Right ventricle myocardium superior (tissue), 1 donor: ENCODE measurements at regions of chr3 and their contacts with region 1.

Region 1: DNA sequence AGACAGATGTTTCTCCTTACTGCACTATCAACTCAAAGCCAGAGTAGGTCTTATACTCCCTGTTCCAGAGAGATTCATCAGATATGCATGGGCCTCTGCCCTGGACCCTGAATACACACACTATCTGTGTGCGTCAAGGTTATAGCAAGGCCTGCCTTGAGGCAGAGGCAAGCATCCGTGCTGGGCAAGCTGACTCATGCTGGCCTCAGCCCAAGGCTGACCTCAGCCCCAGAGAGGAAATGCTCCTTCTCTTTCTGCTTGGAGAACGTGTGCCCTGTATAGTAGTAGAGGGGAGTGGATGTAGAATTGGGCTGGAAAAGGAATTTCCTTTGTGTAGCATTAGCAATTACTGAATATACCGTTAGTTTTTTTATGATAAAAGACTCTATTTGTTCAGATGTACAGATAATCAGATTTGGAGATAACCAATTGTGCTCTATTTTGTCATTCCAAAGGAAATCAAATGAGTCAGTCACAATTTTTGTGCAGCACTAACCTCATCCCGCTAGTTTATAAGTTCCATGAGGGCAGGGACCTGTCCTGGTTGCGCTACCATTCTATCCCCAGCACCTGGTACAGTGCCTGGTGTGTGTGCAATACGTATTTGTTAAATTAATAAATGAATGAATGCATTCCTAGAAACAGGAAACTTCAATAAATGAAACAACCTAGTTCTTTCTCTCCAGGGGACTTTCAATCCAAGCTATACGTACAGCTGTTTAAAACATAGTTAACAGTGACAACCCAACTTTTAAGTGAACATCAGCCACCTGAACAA is 13.3 kb upstream of the PAQR9 start:
- DNase-seq: peak; percentile 93
- ATAC-seq: peak; percentile 73

Region 2: GRCh38 chr3:142857056-142857455 is 119.8 kb before region 1 on chr3:
- intact Hi-C with region 1: loop called (anchors 10 kb)
- DNase-seq: peak; percentile 81
- ATAC-seq: peak; percentile 95

Region 3: DNA sequence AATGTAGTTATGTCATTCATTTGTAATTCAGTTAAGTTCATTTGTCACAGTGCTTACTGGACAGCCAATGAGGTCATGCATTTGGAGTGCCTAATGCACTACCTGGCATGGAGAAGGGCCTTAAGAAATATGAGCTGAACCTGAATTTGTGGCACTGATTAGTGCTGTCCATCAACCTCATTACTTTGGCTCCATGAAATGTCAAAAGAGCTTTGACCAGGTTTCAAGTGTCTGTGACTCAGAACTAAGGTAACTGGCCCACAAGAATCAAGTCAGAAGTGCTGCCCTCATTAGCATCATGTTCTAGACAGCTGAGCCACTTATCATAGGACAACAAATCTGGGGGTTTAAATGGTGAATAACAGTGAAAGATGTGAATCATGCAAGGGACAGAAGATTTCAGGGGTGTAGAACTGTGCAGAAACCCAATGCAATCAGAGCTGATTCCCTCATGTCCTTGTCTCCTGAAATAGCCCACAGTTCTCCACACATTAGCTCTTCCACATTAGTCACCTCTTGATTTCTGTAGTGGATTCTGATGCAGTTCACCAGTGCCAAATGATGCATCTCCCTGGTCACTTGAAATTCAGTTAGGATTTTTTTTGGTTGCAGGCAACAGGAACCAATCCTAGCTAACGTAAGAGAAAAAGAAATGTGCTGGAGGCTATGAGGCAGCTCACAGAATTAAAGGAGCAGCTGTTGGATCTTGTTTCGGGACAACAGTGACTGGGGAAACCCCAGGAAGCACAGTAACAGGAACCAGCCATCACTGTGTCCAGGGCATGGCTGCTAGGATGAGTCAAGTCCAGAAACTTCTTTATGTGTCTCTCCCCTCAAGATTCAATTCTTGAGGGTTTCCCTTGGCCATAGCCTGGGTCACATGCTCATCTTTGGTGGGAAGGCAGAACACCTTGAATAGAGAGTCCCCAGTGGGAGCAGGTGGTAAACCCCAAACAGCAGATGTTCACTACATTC is 181.5 kb after region 1 on chr3:
- intact Hi-C with region 1: no loop called
- DNase-seq: no peak
- ATAC-seq: no peak